GM10248 (cell line): ENCODE measurements at regions of chr20 and their contacts with region 1.

Region 1: DNA sequence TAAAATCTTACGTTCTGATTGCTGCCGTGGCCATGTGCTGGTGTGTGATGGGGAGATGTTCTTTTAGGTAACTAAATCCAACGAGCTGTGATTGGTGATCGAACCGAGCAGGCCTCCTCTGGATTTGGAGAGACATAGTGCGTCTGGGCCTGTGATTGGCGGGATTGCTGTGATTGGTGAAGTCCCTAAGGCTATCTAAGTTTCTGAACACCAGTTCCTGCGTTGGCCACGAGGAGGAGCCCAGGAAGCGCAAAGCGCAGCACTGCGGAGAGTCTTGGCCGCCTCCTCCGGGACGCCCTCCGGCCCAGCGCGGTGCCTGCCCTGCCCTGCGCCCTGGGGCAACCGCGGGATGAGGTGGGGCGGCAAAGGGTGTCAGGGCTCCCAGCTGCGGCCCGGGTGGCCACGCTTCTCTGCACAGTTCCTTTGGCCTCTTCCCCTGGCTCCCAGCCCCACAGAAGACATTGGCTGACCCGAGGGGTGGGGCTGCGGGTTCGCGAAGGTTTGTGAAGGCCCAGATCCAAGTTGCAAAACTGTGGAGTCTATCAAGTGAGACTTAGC is 33.0 kb downstream of the HNF4A start:
- DNase-seq: peak; percentile 85
- CTCF ChIP-seq: peak; percentile 91

Region 2: GRCh38 chr20:43590392-43591323 is 797.9 kb before region 1 on chr20 and contains the start of gene IFT52:
- CTCF ChIA-PET with region 1: no interaction called
- POLR2A ChIA-PET with region 1: no interaction called
- DNase-seq: peak; percentile 96
- CTCF ChIP-seq: no peak

Region 3: DNA sequence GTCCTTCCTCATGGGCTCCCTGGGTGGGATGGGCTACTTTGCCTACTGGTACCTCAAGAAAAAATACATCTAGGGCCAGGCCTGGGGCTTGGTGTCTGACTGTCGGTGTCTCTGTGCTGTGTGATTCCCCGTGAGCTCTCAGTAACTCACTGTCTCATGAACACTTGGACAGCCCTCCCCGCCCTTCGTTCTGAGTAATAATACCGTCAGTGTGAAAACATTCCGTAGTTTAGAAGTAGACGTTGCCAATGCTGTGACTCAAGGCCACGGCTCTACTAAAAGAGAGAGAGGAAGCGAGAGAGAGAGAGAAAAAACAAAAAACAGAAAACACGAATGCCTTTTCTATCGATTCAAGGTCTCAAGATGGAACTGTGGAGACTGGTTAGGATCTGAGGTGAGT is 109.3 kb before region 1 on chr20:
- CTCF ChIA-PET with region 1: no interaction called
- POLR2A ChIA-PET with region 1: no interaction called
- DNase-seq: no peak
- CTCF ChIP-seq: no peak

Region 4: DNA sequence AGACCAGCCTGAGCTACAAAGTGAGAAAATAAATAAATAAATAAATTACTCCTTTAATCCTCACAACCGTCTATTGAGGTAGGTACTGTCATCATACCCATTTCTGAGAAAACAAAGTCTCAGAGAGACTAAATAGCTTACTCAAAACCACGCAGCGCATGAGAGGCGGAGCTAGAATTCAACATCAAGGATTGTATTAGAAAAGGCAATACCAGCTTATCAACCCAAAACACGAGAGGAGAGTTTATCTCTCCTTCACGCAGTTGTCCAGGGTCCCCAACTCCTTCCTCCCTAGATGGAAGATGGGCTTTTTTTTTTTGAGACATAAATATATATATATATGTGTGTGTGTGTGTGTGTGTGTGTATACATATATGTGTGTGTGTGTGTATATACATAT is 20.8 kb before region 1 on chr20:
- CTCF ChIA-PET with region 1: interaction called, 11 read pairs
- POLR2A ChIA-PET with region 1: no interaction called
- DNase-seq: no peak
- CTCF ChIP-seq: no peak

Region 5: DNA sequence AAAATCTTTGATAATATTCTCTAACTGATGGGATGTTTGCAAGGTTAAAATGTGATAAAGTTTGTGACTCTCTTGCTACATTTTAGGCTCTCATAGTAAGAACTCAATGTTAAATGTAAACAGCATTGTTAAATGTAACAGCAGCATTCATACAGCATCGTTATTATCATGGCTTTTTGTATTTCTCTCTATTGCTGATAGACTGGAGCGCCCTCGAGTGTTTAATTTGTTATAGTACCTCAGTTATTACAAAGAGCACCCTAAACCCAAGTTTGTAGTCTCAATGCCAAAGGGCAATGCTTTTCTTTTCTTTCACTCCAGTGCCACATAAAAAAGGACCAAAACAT is 72.2 kb after region 1 on chr20:
- CTCF ChIA-PET with region 1: interaction called, 20 read pairs
- POLR2A ChIA-PET with region 1: no interaction called
- DNase-seq: no peak
- CTCF ChIP-seq: peak; percentile 21